GM12878 (cell line): ENCODE measurements at regions of chr18 and their contacts with region 1.

Region 1: GRCh38 chr18:51051105-51051712 is 21.2 kb downstream of the SMAD4 start:
- DNase-seq: no peak
- ATAC-seq: peak; percentile 98
- H3K4me3 ChIP-seq: no peak overlapping the region
- H3K27ac ChIP-seq: no peak overlapping the region
- H3K4me1 ChIP-seq: peaks cover 6% of the 10 kb centered on the region; the same call in 1 of the 2 replicates
- H3K27me3 ChIP-seq: no peaks in the 10 kb centered on the region
- CTCF ChIP-seq: peak; percentile 78 to 83 (median 79)
- EP300 ChIP-seq: no peak
- POLR2A ChIP-seq: no peak
- RAD21 ChIP-seq: peak; percentile 79

Region 2: GRCh38 chr18:50967714-50968661 is 83.2 kb before region 1 on chr18 and contains the start of gene ELAC1:
- CTCF ChIA-PET with region 1: interaction called, 7 read pairs
- POLR2A ChIA-PET with region 1: no interaction called
- RAD21 ChIA-PET with region 1: interaction called, 3 read pairs
- SMC1A ChIA-PET with region 1: no interaction called
- in situ Hi-C with region 1: no loop called
- intact Hi-C with region 1: loop called (anchors 2 kb)
- DNase-seq: peak; percentile 20
- ATAC-seq: peak; percentile 96
- H3K4me3 ChIP-seq: peak within 1 kb of the TSS; percentile 74
- H3K27ac ChIP-seq: peak within 1 kb of the TSS; percentile 89
- H3K4me1 ChIP-seq: peaks cover 5% of the 10 kb centered on the region
- H3K27me3 ChIP-seq: no peaks in the 10 kb centered on the region
- CTCF ChIP-seq: no peak
- EP300 ChIP-seq: no peak
- POLR2A ChIP-seq: peak; percentile 97
- RAD21 ChIP-seq: no peak
- polyA plus RNA-seq, gene ELAC1: 4.9 to 8.0 TPM

Region 3: GRCh38 chr18:51029694-51030536 is 21.3 kb before region 1 on chr18 and contains the start of gene SMAD4:
- CTCF ChIA-PET with region 1: interaction called, 21 read pairs
- POLR2A ChIA-PET with region 1: interaction called, 9 read pairs
- RAD21 ChIA-PET with region 1: interaction called, 7 read pairs
- SMC1A ChIA-PET with region 1: interaction called, 6 read pairs
- in situ Hi-C with region 1: no loop called
- intact Hi-C with region 1: no loop called
- DNase-seq: peak; percentile 71
- ATAC-seq: peak; percentile 90
- H3K4me3 ChIP-seq: peak within 1 kb of the TSS; percentile 88
- H3K27ac ChIP-seq: peak within 1 kb of the TSS; percentile 77
- H3K4me1 ChIP-seq: peaks cover 6% of the 10 kb centered on the region
- H3K27me3 ChIP-seq: no peaks in the 10 kb centered on the region
- CTCF ChIP-seq: 0 out of 6 replicates have a peak, but pooled peaks of 1 of the 3 experiments have one; percentile 4
- EP300 ChIP-seq: no peak
- POLR2A ChIP-seq: peak; percentile 97
- RAD21 ChIP-seq: no peak
- polyA plus RNA-seq, gene SMAD4: 9.6 to 13.3 TPM

Region 4: DNA sequence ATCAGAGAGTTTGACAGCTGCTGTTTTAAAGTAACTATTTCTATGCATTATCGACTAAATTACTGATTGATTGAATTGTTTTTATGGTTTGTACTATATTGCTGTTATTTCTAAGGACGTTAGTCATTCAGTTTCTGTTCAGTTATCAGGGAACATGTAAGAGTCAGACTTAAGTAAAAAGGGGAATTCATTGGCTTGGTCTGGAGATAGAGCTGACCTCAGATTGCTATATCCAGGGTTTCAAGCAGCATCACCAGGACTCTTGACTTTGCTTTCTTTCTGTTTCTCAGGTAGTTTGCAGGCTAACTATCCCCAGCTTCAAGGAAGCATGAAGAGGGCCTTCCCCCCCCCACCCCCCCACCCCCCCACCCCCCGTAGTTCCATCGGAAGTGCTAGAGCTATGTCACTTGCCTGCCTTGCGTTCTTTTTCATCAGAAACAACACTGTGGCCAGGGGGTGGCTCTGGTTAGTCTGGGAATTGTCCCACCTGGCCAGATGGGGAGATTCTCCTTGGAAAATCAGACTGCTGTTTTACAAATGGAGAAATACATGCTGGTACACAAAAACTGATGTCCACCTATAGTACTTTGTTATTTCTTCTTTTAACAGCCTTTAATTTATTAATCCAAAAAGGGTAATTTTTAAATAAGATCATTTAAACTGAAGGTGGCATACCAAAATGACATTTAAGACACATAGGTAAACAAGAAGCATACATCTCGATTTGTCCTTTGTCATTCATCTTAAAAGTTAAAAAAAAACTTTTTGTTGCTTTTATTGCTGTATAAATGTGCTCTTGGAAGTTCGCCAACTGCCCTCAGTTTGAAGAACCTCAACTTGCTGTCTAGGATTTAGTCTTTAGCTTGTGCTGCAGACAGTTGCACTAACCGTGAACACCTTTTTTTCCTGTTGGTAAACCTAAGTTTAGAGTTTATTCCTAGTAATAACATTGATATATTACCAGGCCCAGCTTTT is 11.8 kb before region 1 on chr18:
- CTCF ChIA-PET with region 1: interaction called, 43 read pairs
- POLR2A ChIA-PET with region 1: interaction called, 4 read pairs
- RAD21 ChIA-PET with region 1: interaction called, 7 read pairs
- SMC1A ChIA-PET with region 1: interaction called, 7 read pairs
- in situ Hi-C with region 1: no loop called
- intact Hi-C with region 1: no loop called
- DNase-seq: no peak
- ATAC-seq: peak; percentile 55
- H3K4me3 ChIP-seq: no peak overlapping the region
- H3K27ac ChIP-seq: no peak overlapping the region
- H3K4me1 ChIP-seq: peaks cover 2% of the 10 kb centered on the region
- H3K27me3 ChIP-seq: no peaks in the 10 kb centered on the region
- CTCF ChIP-seq: no peak
- EP300 ChIP-seq: no peak
- POLR2A ChIP-seq: no peak
- RAD21 ChIP-seq: no peak

Region 5: DNA sequence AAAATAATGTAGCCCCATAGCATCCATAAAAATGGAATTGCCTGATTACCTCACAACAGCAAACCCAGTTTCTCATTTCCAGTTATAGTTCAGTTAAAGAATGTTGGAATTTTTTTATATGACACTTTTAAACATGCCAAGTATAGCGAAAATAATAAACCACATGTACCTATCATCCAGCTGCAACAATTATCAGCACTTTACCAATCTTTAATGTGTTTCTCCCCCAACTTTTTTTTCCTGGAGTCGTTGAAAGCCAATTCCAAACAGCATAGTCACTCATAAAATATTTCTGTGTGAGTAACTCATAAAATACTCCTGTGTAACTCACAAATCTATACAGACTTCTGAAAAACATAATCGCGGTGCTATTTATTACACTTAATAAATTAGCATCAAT is 16.9 kb after region 1 on chr18:
- CTCF ChIA-PET with region 1: interaction called, 7 read pairs
- POLR2A ChIA-PET with region 1: no interaction called
- RAD21 ChIA-PET with region 1: interaction called, 3 read pairs
- SMC1A ChIA-PET with region 1: interaction called, 11 read pairs
- in situ Hi-C with region 1: no loop called
- intact Hi-C with region 1: no loop called
- DNase-seq: no peak
- ATAC-seq: no peak
- H3K4me3 ChIP-seq: no peak overlapping the region
- H3K27ac ChIP-seq: no peak overlapping the region
- H3K4me1 ChIP-seq: no peaks in the 10 kb centered on the region
- H3K27me3 ChIP-seq: no peaks in the 10 kb centered on the region
- CTCF ChIP-seq: no peak
- EP300 ChIP-seq: no peak
- POLR2A ChIP-seq: no peak
- RAD21 ChIP-seq: no peak